Heart right ventricle (tissue), 16 donors: ENCODE measurements at regions of chr7 and their contacts with region 1.

Region 1: DNA sequence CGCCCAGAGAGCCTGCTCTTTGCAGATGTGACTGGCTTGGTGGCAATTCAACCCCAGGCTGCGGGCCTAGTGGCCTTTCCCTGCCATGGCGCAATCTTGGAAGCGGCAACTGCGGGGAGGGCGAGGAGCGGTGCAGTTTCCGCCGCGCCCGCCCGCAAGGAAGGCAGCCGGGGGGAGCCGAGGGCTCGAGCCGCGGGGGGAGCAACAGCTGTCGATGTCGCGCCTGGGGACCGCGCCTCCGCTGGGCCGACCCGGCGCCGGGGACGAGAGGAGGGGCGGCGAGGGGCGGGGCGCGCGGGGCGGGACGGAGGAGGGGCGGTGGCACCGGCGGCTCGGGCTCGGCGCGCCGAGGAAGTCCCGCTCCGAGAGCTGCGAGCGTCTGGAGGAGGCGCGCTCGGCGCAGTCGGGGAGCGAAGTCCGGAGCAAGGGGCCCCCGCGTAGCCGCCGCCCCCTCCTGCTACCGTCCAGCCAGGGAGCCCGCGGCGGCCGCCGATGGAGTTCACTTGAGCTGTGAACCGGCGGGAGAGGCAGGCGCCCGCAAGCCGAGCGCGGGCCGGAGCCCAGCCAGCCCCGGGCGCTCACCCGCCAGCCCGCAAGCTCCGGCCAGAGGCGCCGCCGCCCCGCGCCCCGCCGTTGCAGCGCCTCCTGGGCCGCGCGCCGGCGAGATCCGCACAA is 438.1 kb upstream of the GALNT17 start:
- DNase-seq: peak; percentile 67 to 80
- ATAC-seq: peak; percentile 81 to 92 (median 86)
- H3K4me3 ChIP-seq: peak overlapping the region; percentile 34 to 94 (median 81)
- H3K27ac ChIP-seq: peak overlapping the region; percentile 40 to 84 (median 66)
- H3K4me1 ChIP-seq: peaks cover 0 to 25% (median 16%) of the 10 kb centered on the region in 9 donors
- H3K27me3 ChIP-seq: peaks cover 0 to 45% (median 0%) of the 10 kb centered on the region in 7 donors
- CTCF ChIP-seq: peak in 3 of 9 donors; percentile 25 to 28 (median 26)

Region 2: GRCh38 chr7:70193514-70193913 is 500.3 kb before region 1 on chr7:
- intact Hi-C with region 1: loop called in 4 of 10 experiments (anchors 5 to 10 kb)
- DNase-seq: no peak
- ATAC-seq: no peak
- H3K4me3 ChIP-seq: no peak overlapping the region
- H3K27ac ChIP-seq: no peak overlapping the region
- H3K4me1 ChIP-seq: no peaks in the 10 kb centered on the region
- H3K27me3 ChIP-seq: no peaks in the 10 kb centered on the region
- CTCF ChIP-seq: peak in 8 of 9 donors; percentile 4 to 53 (median 31)

Region 3: GRCh38 chr7:70354409-70355169 is 339.2 kb before region 1 on chr7:
- intact Hi-C with region 1: loop called in 1 of 10 experiments (anchors 10 kb)
- DNase-seq: no peak
- ATAC-seq: no peak
- H3K4me3 ChIP-seq: no peak overlapping the region
- H3K27ac ChIP-seq: no peak overlapping the region
- H3K4me1 ChIP-seq: peaks cover 0 to 6% (median 0%) of the 10 kb centered on the region in 9 donors
- H3K27me3 ChIP-seq: no peaks in the 10 kb centered on the region
- CTCF ChIP-seq: no peak

Region 4: GRCh38 chr7:70614237-70615045 is 79.4 kb before region 1 on chr7:
- intact Hi-C with region 1: loop called in 1 of 10 experiments (anchors 5 kb)
- DNase-seq: peak; percentile 74 to 86
- ATAC-seq: peak; percentile 93 to 99 (median 96)
- H3K4me3 ChIP-seq: peak overlapping the region in 1 of 10 donors; percentile 22
- H3K27ac ChIP-seq: peak overlapping the region in 3 of 10 donors; percentile 29 to 53 (median 36)
- H3K4me1 ChIP-seq: peaks cover 4 to 19% (median 13%) of the 10 kb centered on the region in 9 donors
- H3K27me3 ChIP-seq: no peaks in the 10 kb centered on the region
- CTCF ChIP-seq: no peak